ENCODE measurements at regions of chr1 and their contacts with region 1.

Region 1: DNA sequence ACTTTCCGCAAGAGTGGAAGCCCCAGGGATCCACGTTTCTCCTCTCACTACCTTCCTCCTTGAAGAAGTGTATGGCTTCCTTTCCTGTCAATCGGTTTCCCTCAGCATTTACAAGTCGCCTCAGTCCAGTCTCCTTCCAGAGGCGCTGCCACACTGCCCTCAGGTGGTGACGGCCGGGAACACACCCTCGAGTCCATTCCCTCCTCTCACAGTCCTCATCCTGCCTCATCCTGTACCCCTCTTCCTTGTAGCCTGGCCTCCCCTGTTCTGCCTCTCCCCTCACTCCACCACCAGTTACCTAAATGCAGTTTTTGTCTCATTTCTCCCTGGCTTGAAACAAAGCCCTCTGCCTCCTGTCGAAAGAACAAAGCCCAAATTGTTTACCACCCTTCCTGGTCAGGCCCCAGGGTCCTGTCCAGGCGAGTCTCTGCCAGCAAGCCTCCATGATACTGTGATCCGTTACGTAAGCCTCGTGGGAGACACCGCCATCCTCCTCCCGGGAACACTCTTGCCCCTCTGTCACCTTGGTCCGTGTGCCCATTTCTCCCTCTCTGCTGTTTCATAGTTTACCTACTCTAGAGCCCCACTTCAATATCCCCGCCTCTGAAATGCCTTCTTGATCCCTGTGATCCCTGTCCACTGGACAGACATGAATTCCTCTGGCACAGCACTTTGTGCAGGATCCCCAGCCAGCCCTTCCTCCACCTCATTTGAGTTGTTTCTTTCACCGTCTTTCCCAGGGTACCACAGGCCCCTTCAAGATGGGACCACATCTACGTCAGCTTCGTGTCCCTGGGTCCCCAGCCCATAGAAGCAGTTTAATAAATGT is 23.3 kb upstream of the LSM10 start:
- DNase-seq: peak; percentile 78 to 95 (median 86)
- H3K4me3 ChIP-seq: no peak overlapping the region
- H3K27ac ChIP-seq: no peak overlapping the region
- H3K4me1 ChIP-seq: peaks cover 3 to 6% of the 10 kb centered on the region in 2 donors
- H3K27me3 ChIP-seq: no peaks in the 10 kb centered on the region
- CTCF ChIP-seq: peak; percentile 82 to 95 (median 94)
- POLR2A ChIP-seq: no peak

Region 2: GRCh38 chr1:36342481-36343478 is 78.3 kb before region 1 on chr1:
- intact Hi-C with region 1: loop called (anchors 5 kb)
- DNase-seq: peak; percentile 55 to 80 (median 68)
- H3K4me3 ChIP-seq: no peak overlapping the region
- H3K27ac ChIP-seq: peak overlapping the region in 3 of 5 donors; percentile 23 to 65 (median 64)
- H3K4me1 ChIP-seq: peaks cover 19 to 24% of the 10 kb centered on the region in 2 donors
- H3K27me3 ChIP-seq: no peaks in the 10 kb centered on the region
- CTCF ChIP-seq: peak; percentile 26 to 74 (median 69)
- POLR2A ChIP-seq: no peak

Measured in adrenal gland (tissue), 19 donors.